ENCODE measurements at regions of chr17 and their contacts with region 1.

Region 1: DNA sequence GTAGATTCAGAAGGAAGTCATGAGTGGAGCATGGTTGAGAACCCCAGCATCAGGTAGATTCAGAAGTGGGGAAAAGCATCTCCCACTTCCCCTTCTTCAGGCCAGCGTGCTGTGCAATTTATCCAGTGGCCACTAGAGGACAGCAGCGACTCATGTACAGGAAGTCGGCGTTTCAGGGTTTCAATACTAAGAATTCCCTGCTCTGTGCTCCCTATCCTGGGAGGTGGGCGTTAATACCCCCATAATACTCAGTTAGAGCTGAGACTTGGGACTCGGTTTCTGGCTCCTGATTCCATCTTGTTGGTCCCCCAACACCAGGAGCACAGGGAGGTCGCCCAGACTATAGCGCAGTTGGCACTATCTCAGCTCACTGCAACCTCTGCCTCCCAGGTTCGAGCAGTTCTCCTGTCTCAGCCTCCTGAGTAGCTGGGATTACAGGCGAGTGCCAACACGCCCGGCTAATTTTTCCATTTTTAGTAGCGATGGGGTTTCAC is 75.3 kb upstream of the AMZ2 start:
- DNase-seq: peak; percentile 77
- H3K4me3 ChIP-seq: no peak overlapping the region
- H3K27ac ChIP-seq: no peak overlapping the region
- H3K4me1 ChIP-seq: no peaks in the 10 kb centered on the region
- H3K27me3 ChIP-seq: no peaks in the 10 kb centered on the region
- CTCF ChIP-seq: peak; percentile 99
- EP300 ChIP-seq: no peak
- RAD21 ChIP-seq: peak; percentile 95

Region 2: GRCh38 chr17:68133346-68134045 is 39.0 kb before region 1 on chr17:
- CTCF ChIA-PET with region 1: no interaction called
- POLR2A ChIA-PET with region 1: no interaction called
- DNase-seq: no peak
- H3K4me3 ChIP-seq: no peak overlapping the region
- H3K27ac ChIP-seq: no peak overlapping the region
- H3K4me1 ChIP-seq: peaks cover 0 to 3% of the 10 kb centered on the region in 2 experiments; a peak in 1 of 4 replicates
- H3K27me3 ChIP-seq: no peaks in the 10 kb centered on the region
- CTCF ChIP-seq: no peak
- EP300 ChIP-seq: no peak
- RAD21 ChIP-seq: no peak

Region 3: GRCh38 chr17:68148936-68149335 is 23.6 kb before region 1 on chr17:
- CTCF ChIA-PET with region 1: interaction called, 13 read pairs
- POLR2A ChIA-PET with region 1: no interaction called
- DNase-seq: no peak
- H3K4me3 ChIP-seq: no peak overlapping the region
- H3K27ac ChIP-seq: no peak overlapping the region
- H3K4me1 ChIP-seq: peaks cover 0 to 4% of the 10 kb centered on the region in 2 experiments; a peak in 1 of 4 replicates
- H3K27me3 ChIP-seq: no peaks in the 10 kb centered on the region
- CTCF ChIP-seq: no peak
- EP300 ChIP-seq: no peak
- RAD21 ChIP-seq: no peak

Region 4: DNA sequence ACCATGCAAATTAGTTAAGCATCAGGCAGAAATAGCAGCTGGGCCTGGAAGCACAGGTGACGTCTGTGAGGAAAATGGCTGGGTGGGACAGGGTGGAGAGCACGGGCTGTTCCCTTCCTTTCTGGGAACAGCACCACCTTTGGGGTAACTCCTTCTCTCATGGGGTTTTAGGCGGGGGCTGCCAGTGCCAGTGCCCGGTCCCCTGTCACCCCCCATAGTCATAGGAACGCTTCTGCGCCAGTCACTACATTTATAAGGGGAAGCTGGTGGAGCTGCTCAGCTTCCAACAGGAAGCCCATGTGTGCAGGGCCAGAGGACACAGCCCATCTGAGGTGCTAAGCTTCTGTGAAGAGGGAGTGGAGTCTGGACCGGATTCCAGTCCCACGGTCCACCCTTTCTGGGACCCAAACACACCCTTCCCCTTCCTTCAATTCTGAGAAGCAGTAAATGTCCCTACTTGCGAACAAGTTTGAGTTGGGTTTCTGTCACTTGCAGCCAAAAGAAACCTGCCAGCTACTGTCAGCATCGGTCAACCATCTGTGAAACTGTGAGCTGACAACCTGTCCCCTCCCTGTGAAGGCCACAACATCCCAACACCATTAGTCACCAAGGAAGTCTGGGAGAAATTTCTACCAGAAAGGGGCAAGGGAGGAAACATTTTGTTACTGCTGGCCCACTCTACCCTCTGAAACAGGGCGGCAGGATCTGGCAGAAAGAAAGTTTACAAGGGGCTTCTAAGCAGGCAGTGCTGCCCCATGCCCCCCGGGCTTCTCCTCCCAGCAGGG is 10.7 kb before region 1 on chr17:
- CTCF ChIA-PET with region 1: interaction called, 50 read pairs
- POLR2A ChIA-PET with region 1: no interaction called
- DNase-seq: no peak
- H3K4me3 ChIP-seq: no peak overlapping the region
- H3K27ac ChIP-seq: no peak overlapping the region
- H3K4me1 ChIP-seq: no peaks in the 10 kb centered on the region
- H3K27me3 ChIP-seq: no peaks in the 10 kb centered on the region
- CTCF ChIP-seq: no peak
- EP300 ChIP-seq: no peak
- RAD21 ChIP-seq: no peak

Region 5: DNA sequence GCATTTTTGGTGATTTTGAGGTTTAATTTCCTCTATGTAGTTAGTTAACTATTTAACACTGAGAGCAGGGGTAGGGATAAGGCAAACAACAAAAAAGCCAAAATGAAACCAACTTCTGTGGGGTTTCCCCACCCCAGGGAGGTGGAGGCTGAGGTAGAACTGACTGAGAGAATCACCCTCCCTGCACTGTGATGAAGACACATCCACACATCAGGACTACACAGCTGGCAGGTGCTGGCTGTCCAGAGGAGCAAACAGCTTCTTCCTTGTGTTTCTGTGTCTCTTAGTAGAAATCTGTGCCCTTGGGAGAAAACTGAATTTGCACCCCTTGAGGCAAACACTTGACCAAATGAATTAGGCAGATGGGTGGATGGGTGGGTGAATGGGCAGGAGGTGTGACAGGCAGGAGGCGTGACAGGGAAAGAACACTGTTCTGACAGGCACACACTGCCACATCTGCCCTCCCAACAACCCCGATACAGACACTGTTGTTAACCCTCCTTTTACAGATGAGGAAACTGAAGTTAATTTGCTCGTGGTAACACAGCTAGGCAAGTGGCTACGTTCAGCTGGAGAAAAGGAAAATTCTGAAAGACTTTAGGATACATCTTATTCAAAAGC is 12.4 kb after region 1 on chr17:
- CTCF ChIA-PET with region 1: interaction called, 58 read pairs
- POLR2A ChIA-PET with region 1: no interaction called
- DNase-seq: no peak
- H3K4me3 ChIP-seq: no peak overlapping the region
- H3K27ac ChIP-seq: no peak overlapping the region
- H3K4me1 ChIP-seq: no peaks in the 10 kb centered on the region
- H3K27me3 ChIP-seq: no peaks in the 10 kb centered on the region
- CTCF ChIP-seq: no peak
- EP300 ChIP-seq: no peak
- RAD21 ChIP-seq: no peak

Region 6: DNA sequence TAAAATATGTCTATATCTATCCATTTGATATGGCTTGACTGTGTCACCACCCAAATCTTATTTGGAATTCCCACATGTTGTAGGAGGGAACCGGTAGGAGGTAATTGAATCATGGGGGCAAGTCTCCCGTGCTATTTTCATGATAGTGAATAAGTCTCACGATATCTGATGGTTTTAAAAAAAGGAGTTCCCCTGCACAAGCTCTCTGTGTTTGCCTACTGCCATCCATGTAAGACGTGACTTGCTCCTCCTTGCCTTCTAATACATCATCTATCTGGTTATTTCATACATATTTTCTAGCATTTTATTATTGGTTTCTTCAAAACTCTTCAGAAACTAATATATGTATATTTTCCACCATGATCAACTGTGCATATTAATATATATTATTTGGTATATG is 18.0 kb after region 1 on chr17:
- CTCF ChIA-PET with region 1: interaction called, 194 read pairs
- POLR2A ChIA-PET with region 1: no interaction called
- DNase-seq: no peak
- H3K4me3 ChIP-seq: no peak overlapping the region
- H3K27ac ChIP-seq: no peak overlapping the region
- H3K4me1 ChIP-seq: no peaks in the 10 kb centered on the region; a peak in 1 of 4 replicates
- H3K27me3 ChIP-seq: peaks cover 8% of the 10 kb centered on the region
- CTCF ChIP-seq: no peak
- EP300 ChIP-seq: no peak
- RAD21 ChIP-seq: no peak

Region 7: GRCh38 chr17:68205251-68205807 is 32.8 kb after region 1 on chr17:
- CTCF ChIA-PET with region 1: interaction called, 194 read pairs
- POLR2A ChIA-PET with region 1: no interaction called
- DNase-seq: peak; percentile 97
- H3K4me3 ChIP-seq: peak overlapping the region; percentile 78 to 84
- H3K27ac ChIP-seq: peak overlapping the region; percentile 56 to 85; a peak in 3 of 4 replicates
- H3K4me1 ChIP-seq: peaks cover 0 to 15% of the 10 kb centered on the region in 2 experiments; a peak in 2 of 4 replicates
- H3K27me3 ChIP-seq: peaks cover 10% of the 10 kb centered on the region
- CTCF ChIP-seq: peak; percentile 97
- EP300 ChIP-seq: peak in 1 of 2 experiments; percentile 45; a peak in 1 of 4 replicates
- RAD21 ChIP-seq: peak; percentile 52

Region 8: DNA sequence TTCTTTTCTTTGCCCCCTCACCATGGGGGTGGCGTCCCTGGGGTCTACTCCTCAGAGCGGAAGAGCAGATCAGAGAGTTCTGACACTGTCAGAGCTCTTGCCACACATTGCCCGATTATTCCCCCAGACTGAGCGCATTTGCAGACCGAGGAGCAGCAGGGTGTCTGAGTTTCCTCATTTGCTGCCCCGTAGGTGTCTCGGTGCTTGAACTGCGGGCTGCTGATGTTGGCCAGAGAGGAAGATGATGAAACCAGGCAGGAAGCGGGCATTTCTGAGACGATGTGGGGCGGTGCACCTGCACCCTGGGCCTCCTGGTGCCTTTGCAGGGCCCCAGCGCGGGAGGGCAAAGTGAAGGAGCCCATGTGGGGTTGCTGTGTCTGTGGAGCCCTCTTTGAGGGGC is 173.9 kb after region 1 on chr17:
- CTCF ChIA-PET with region 1: no interaction called
- POLR2A ChIA-PET with region 1: no interaction called
- DNase-seq: no peak
- H3K4me3 ChIP-seq: no peak overlapping the region
- H3K27ac ChIP-seq: no peak overlapping the region
- H3K4me1 ChIP-seq: peaks cover 0 to 1% of the 10 kb centered on the region in 2 experiments; a peak in 2 of 4 replicates
- H3K27me3 ChIP-seq: peaks cover 5% of the 10 kb centered on the region; the same call in 1 of the 2 replicates
- CTCF ChIP-seq: no peak
- EP300 ChIP-seq: no peak
- RAD21 ChIP-seq: no peak

Region 9: GRCh38 chr17:68457539-68458259 is 285.2 kb after region 1 on chr17:
- CTCF ChIA-PET with region 1: interaction called, 10 read pairs
- POLR2A ChIA-PET with region 1: no interaction called
- DNase-seq: peak; percentile 100
- H3K4me3 ChIP-seq: peak overlapping the region; percentile 77 to 93
- H3K27ac ChIP-seq: peak overlapping the region in 1 of 2 experiments; percentile 18; a peak in 1 of 4 replicates
- H3K4me1 ChIP-seq: peaks cover 8 to 23% of the 10 kb centered on the region in 2 experiments; a peak in 3 of 4 replicates
- H3K27me3 ChIP-seq: no peaks in the 10 kb centered on the region
- CTCF ChIP-seq: no peak
- EP300 ChIP-seq: no peak
- RAD21 ChIP-seq: no peak

Measured in SK-N-SH (cell line).